ENCODE measurements at regions of chr5 and their contacts with region 1.

Region 1: GRCh38 chr5:88690409-88691229 is 192.4 kb downstream of the MEF2C start:
- DNase-seq: peak; percentile 67
- H3K4me3 Mint-ChIP-seq: peak overlapping the region; percentile 34
- H3K27ac Mint-ChIP-seq: peak overlapping the region; percentile 71
- H3K4me1 Mint-ChIP-seq: peaks cover 6% of the 10 kb centered on the region
- H3K27me3 Mint-ChIP-seq: peaks cover 95% of the 10 kb centered on the region

Region 2: DNA sequence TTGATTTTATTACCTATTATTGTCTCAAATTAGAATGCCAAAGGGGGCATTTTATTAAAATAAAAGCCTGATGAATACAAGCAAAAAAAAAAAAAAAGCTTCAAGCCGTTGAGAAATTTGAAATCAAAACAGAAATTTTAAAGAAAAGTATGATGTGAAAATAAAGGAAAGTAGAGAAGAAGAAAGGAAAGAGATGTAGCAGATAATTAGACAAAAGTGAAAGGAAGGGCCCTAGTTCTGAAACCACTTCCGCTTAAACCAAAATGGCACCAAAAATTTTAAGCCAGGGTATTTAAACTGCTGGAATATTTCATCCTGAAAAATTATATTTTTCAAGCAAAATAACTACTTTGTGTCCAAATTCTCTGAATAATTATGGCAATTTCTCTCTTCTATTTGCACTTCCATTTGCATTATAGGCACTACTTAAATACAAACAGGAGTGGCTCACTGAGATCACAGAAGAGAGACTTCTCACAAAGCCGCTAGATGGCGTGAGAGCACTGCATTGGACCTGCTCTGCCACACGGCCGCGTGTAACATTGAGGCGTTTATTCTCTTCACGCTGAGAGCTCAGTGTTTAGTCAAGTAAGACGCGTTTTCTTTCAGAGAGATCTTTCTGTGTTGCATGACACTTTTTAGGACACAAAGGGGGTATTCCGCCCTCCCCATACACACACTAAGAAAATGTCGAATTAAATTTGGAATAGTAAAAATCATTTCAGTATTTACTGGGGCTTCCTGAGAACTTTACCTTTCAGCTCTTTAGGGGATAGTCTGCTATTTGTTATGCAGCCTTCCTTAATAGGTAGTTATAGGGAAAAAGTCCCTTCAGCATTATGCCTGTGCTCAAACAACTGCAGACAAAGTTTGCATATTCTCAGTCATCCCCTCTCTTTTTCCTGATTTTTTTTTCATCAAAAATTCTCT is 909.5 kb before region 1 on chr5:
- CTCF ChIA-PET with region 1: interaction called, 38 read pairs
- POLR2A ChIA-PET with region 1: no interaction called
- DNase-seq: peak; percentile 79
- H3K4me3 Mint-ChIP-seq: no peak overlapping the region
- H3K27ac Mint-ChIP-seq: no peak overlapping the region
- H3K4me1 Mint-ChIP-seq: no peaks in the 10 kb centered on the region
- H3K27me3 Mint-ChIP-seq: peaks cover 16% of the 10 kb centered on the region

Region 3: DNA sequence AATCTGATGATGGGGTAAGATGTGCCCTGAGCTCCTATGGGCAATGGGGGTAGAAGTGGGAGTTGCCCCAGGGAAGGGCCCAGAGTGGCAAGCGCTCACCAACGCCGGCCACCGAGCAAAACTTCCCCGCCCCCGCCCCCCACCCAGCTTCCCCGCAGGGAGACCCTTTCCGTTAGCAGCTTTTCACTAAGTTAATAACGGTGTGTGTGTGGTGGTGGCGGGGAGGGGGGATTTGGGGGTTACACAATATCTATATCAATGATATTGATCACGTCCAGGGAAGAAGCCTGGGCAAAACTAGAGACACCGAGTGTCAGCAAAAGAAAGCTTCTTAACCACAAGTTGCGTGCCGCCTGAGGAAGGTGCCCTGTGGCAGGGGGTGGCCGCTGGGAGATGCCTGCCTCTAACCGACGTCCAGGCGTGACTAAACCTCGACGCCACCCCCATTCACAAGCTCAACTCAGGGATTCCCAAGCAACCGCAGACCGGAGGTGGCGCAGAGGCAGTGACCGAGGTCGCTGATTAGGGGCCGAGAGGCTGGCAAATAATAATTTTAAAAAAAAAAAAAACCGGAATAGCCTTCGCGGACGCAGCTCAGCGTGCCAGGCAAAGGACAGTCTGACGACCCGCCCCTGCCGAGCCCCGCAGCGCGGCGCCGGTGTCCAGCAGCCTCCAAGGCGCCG is 30.2 kb before region 1 on chr5:
- CTCF ChIA-PET with region 1: interaction called, 23 read pairs
- POLR2A ChIA-PET with region 1: interaction called, 3 read pairs
- DNase-seq: no peak
- H3K4me3 Mint-ChIP-seq: peak overlapping the region; percentile 41
- H3K27ac Mint-ChIP-seq: no peak overlapping the region
- H3K4me1 Mint-ChIP-seq: peaks cover 14% of the 10 kb centered on the region
- H3K27me3 Mint-ChIP-seq: peaks cover 68% of the 10 kb centered on the region

Region 4: DNA sequence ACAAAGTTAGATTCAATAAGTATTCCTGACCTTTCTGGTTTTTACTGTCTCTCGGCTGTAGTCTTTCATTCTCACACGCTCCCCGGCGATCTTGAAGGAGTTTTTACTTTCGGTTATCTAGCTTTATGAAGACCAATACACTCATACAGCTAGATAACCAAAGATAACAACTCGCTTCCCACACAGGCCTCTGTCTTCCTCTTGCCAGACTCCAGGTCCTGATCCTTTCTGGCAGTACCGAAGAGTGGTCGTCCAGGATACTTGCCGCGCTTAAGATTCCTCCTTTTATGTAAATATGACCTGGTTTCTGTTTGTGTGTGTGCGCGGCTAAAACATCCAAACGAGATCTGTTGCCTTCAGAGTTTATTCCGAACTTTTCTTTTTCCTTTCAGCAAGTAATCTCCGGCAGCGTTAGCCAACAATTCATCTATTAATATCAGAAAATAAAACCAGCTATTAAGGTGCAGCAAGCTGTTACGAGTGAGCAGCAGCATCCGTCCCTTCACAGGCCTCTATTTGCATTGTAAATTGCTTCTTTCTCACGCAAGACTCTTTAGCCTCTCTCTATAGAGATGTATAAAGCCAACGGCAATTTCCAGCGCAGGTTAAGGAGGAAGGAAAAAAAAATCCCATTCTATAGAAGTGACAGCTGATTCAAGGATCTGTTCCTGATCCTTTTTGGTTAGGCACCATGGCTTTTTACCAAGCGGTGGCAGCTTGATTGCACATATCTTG is 23.7 kb before region 1 on chr5:
- CTCF ChIA-PET with region 1: interaction called, 16 read pairs
- POLR2A ChIA-PET with region 1: no interaction called
- DNase-seq: no peak
- H3K4me3 Mint-ChIP-seq: peak overlapping the region; percentile 71
- H3K27ac Mint-ChIP-seq: no peak overlapping the region
- H3K4me1 Mint-ChIP-seq: peaks cover 28% of the 10 kb centered on the region
- H3K27me3 Mint-ChIP-seq: peaks cover 86% of the 10 kb centered on the region

Region 5: GRCh38 chr5:88680253-88681132 is 10.1 kb before region 1 on chr5:
- CTCF ChIA-PET with region 1: interaction called, 33 read pairs
- POLR2A ChIA-PET with region 1: interaction called, 6 read pairs
- DNase-seq: peak; percentile 77
- H3K4me3 Mint-ChIP-seq: peak overlapping the region; percentile 39
- H3K27ac Mint-ChIP-seq: no peak overlapping the region
- H3K4me1 Mint-ChIP-seq: peaks cover 21% of the 10 kb centered on the region
- H3K27me3 Mint-ChIP-seq: peaks cover 81% of the 10 kb centered on the region

Region 6: GRCh38 chr5:88708682-88709398 is 18.2 kb after region 1 on chr5:
- CTCF ChIA-PET with region 1: no interaction called
- POLR2A ChIA-PET with region 1: no interaction called
- DNase-seq: no peak
- H3K4me3 Mint-ChIP-seq: no peak overlapping the region
- H3K27ac Mint-ChIP-seq: no peak overlapping the region
- H3K4me1 Mint-ChIP-seq: no peaks in the 10 kb centered on the region
- H3K27me3 Mint-ChIP-seq: peaks cover 5% of the 10 kb centered on the region